Caco-2 (cell line): ENCODE measurements at regions of chr11 and their contacts with region 1.

Region 1: DNA sequence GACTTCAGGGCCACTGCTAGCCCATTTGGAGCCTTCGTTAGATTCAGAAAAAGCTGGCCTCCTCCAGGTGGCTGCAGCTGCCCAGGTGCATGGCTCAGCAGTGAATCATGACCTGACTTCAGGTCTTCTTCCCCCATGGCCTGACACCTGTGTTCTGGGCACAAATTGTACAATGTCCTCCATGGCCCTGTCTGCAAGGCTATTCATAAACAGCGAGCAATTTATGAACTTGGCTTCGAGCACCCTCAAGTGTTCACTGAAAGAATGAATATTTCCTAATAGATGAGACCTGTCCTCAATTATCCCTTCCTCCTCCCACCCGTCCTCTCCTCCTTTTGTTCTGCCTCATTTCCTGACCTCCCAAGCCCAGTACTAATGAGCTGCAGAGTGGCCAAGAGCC is 12.2 kb upstream of the VPS37C start:
- DNase-seq: peak; percentile 43 to 46
- H3K4me3 ChIP-seq: no peak overlapping the region
- H3K4me3 Mint-ChIP-seq: no peak overlapping the region
- H3K27ac Mint-ChIP-seq: no peak overlapping the region
- H3K4me1 ChIP-seq: peaks cover 8% of the 10 kb centered on the region; the same call in 1 of the 2 replicates
- H3K4me1 Mint-ChIP-seq: peaks cover 7% of the 10 kb centered on the region
- H3K27me3 ChIP-seq: no peaks in the 10 kb centered on the region
- H3K27me3 Mint-ChIP-seq: no peaks in the 10 kb centered on the region
- CTCF ChIP-seq: peak; percentile 25 to 40

Region 2: DNA sequence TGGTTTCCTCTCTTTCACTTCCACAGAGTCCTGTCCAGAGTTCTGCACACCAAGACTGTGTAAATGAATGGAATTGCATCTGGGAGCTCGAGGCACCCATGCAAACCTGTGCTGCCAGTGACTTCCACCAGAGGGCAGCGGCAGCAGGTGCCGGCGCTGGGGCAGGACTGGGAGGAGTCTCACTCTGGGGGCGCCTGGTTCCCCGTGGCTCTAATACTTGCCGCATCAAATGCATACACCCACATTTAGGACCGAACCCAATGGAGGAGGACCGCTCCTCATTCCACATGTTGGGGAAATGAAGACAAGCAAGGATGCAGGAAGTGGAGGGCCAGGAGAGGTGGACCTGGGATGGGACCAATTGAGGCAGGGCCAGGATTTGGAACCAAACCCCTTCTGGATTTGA is 203.1 kb before region 1 on chr11:
- CTCF ChIA-PET with region 1: no interaction called
- POLR2A ChIA-PET with region 1: no interaction called
- intact Hi-C with region 1: loop called (anchors 1 kb)
- DNase-seq: peak in 1 of 2 experiments; percentile 65
- H3K4me3 ChIP-seq: no peak overlapping the region
- H3K4me3 Mint-ChIP-seq: no peak overlapping the region
- H3K27ac Mint-ChIP-seq: no peak overlapping the region
- H3K4me1 ChIP-seq: no peaks in the 10 kb centered on the region
- H3K4me1 Mint-ChIP-seq: no peaks in the 10 kb centered on the region
- H3K27me3 ChIP-seq: no peaks in the 10 kb centered on the region
- H3K27me3 Mint-ChIP-seq: peaks cover 3% of the 10 kb centered on the region
- CTCF ChIP-seq: peak; percentile 65 to 85